ENCODE measurements at regions of chr22 and their contacts with region 1.

Region 1: DNA sequence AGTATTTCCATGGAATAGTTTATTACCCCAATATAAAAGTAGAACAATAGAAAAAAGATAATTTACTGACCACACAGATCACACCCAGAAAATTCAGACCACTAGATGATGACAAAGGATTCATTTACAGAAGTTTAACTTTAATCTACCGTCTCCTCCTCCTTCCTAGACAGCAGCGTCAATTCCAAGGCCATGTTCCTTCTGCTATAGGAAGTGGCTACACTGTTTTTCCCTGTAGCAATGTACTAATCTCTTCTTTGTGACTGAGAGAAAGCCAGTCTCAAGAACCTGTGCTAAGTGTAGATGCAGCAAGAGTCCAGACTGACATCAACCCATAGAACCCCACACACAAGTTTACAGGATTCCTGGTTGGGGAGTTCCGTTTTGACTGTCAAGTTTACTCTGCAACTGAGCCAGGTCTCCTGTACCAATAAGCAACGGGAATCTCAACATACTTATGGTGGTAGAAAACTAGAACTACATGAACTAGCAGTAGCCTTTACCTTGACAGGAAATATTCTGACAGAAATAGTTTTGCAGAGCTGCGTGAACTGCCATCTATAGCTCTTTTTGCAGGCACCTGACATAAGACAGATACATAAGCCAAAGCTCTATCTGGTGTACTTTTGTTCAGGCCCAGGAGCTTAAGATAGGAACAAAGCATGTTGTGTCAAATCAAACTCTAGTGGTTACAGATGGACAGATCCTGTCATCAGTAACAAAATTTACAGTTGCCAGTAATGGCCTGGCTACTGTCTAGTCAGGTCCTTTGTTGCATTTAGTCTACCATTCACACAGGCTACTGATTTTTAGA is 42.9 kb downstream of the MRTFA start:
- DNase-seq: peak in 1 of 35 experiments; percentile 5
- ATAC-seq: peak in 1 of 4 experiments; percentile 50
- H3K4me3 ChIP-seq: no peak overlapping the region
- H3K4me3 Mint-ChIP-seq: no peak overlapping the region
- H3K27ac ChIP-seq: no peak overlapping the region
- H3K27ac Mint-ChIP-seq: no peak overlapping the region
- H3K4me1 ChIP-seq: peaks cover 2 to 10% of the 10 kb centered on the region in 2 experiments
- H3K4me1 Mint-ChIP-seq: peaks cover 41 to 51% (median 42%) of the 10 kb centered on the region in 3 donors
- H3K27me3 ChIP-seq: no peaks in the 10 kb centered on the region
- H3K27me3 Mint-ChIP-seq: no peaks in the 10 kb centered on the region

Region 2: GRCh38 chr22:39405346-39406085 is 1188.2 kb before region 1 on chr22:
- CTCF ChIA-PET with region 1: no interaction called
- POLR2A ChIA-PET with region 1: no interaction called
- DNase-seq: peak in 2 of 35 experiments; percentile 16 to 39
- ATAC-seq: peak in 1 of 4 experiments; percentile 75
- H3K4me3 ChIP-seq: no peak overlapping the region
- H3K4me3 Mint-ChIP-seq: no peak overlapping the region
- H3K27ac ChIP-seq: no peak overlapping the region
- H3K27ac Mint-ChIP-seq: peak overlapping the region in 1 of 2 donors; percentile 7
- H3K4me1 ChIP-seq: peaks cover 6 to 32% of the 10 kb centered on the region in 2 experiments
- H3K4me1 Mint-ChIP-seq: peaks cover 66 to 73% (median 67%) of the 10 kb centered on the region in 3 donors
- H3K27me3 ChIP-seq: no peaks in the 10 kb centered on the region
- H3K27me3 Mint-ChIP-seq: no peaks in the 10 kb centered on the region

Region 3: DNA sequence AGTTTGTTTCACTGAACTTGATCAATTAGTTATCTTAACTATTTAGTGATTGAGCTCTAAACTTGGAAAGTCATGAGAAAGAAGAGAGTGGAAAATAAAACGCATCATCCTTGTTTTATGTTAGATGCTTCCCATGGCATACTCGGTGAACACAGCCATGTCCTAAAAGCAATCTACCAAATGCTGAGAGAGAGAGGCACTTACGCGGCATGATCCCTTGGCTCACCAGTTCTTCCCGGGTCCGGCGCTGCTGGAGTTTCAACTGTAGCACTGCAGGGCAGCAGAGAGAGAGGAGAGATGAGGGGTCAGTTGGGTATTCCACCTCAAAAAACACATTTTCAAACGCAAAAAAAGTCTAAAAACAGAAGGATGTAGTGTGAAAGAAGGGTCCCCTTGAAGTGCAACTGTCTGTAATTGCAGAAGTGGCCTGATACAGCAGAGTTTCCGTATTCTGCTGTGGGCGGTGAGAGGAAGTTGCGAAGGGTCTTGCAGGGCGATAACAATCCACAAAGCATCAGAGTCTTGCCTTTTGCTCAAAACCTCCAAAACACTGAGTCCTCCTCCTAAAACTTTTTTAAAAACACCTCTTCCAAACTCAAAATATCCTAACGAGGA is 130.5 kb before region 1 on chr22:
- CTCF ChIA-PET with region 1: no interaction called
- POLR2A ChIA-PET with region 1: interaction called in 1 of 2 experiments, 12 read pairs
- DNase-seq: peak in 34 of 35 experiments; percentile 7 to 69 (median 35)
- ATAC-seq: peak; percentile 86 to 90 (median 89)
- H3K4me3 ChIP-seq: peak overlapping the region; percentile 71 to 94
- H3K4me3 Mint-ChIP-seq: peak overlapping the region; percentile 92 to 99 (median 99)
- H3K27ac ChIP-seq: peak overlapping the region; percentile 59
- H3K27ac Mint-ChIP-seq: peak overlapping the region; percentile 98 to 100
- H3K4me1 ChIP-seq: peaks cover 26 to 44% of the 10 kb centered on the region in 2 experiments
- H3K4me1 Mint-ChIP-seq: peaks cover 76 to 79% (median 79%) of the 10 kb centered on the region in 3 donors
- H3K27me3 ChIP-seq: no peaks in the 10 kb centered on the region
- H3K27me3 Mint-ChIP-seq: no peaks in the 10 kb centered on the region

Region 4: GRCh38 chr22:40610329-40610850 is 16.7 kb after region 1 on chr22:
- CTCF ChIA-PET with region 1: interaction called in 1 of 2 experiments, 5 read pairs
- POLR2A ChIA-PET with region 1: interaction called in 1 of 2 experiments, 16 read pairs
- DNase-seq: no peak
- ATAC-seq: no peak
- H3K4me3 ChIP-seq: no peak overlapping the region
- H3K4me3 Mint-ChIP-seq: no peak overlapping the region
- H3K27ac ChIP-seq: no peak overlapping the region
- H3K27ac Mint-ChIP-seq: no peak overlapping the region
- H3K4me1 ChIP-seq: peaks cover 5 to 7% of the 10 kb centered on the region in 2 experiments
- H3K4me1 Mint-ChIP-seq: peaks cover 59 to 60% (median 60%) of the 10 kb centered on the region in 3 donors
- H3K27me3 ChIP-seq: no peaks in the 10 kb centered on the region
- H3K27me3 Mint-ChIP-seq: no peaks in the 10 kb centered on the region

Measured in T-cell (primary cell).